B cell (primary cell): ENCODE measurements at regions of chr16 and their contacts with region 1.

Region 1: GRCh38 chr16:71894921-71895678 is at the start of gene IST1:
- DNase-seq: peak; percentile 98
- ATAC-seq: peak; percentile 91
- H3K4me3 ChIP-seq: peak within 1 kb of the TSS; percentile 93 to 100 (median 99)
- H3K4me3 Mint-ChIP-seq: peak within 1 kb of the TSS; percentile 97
- H3K27ac ChIP-seq: peak within 1 kb of the TSS; percentile 83 to 88
- H3K27ac Mint-ChIP-seq: peak within 1 kb of the TSS; percentile 98
- H3K4me1 ChIP-seq: peaks cover 16 to 39% of the 10 kb centered on the region in 2 donors
- H3K4me1 Mint-ChIP-seq: peaks cover 22% of the 10 kb centered on the region
- H3K27me3 ChIP-seq: no peaks in the 10 kb centered on the region
- H3K27me3 Mint-ChIP-seq: no peaks in the 10 kb centered on the region
- CTCF ChIP-seq: no peak
- total RNA-seq, gene IST1: 268 and 302 TPM in 2 replicates

Region 2: DNA sequence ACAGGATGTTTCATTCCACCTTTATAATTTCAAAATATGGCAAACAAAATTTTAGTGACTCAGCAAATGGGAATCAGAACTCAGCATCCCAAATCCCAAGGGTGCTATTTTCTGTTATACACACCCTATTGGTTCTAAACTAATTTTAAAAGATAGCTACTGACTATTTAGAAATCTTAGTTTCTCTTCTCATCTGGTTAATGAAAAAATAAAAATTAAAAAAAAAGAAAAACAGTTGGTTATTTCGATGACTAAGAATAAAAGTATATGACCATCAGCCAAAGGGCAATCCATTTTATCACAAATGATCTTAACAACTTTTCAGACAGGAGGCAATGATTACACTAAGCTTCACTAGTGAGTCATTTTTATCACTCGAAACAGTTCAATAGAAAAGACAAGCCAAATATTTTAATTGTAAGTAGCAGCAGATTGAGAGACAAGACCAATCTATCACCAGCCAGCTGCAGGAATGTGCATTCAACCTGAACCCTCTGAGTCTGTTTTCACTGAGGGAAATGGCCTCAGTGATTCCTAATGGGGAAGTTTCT is 185.8 kb before region 1 on chr16:
- CTCF ChIA-PET with region 1: no interaction called
- POLR2A ChIA-PET with region 1: no interaction called
- intact Hi-C with region 1: no loop called
- DNase-seq: no peak
- ATAC-seq: no peak
- H3K4me3 ChIP-seq: no peak overlapping the region
- H3K4me3 Mint-ChIP-seq: no peak overlapping the region
- H3K27ac ChIP-seq: no peak overlapping the region
- H3K27ac Mint-ChIP-seq: no peak overlapping the region
- H3K4me1 ChIP-seq: peaks cover 0 to 8% of the 10 kb centered on the region in 2 donors
- H3K4me1 Mint-ChIP-seq: peaks cover 3% of the 10 kb centered on the region
- H3K27me3 ChIP-seq: no peaks in the 10 kb centered on the region
- H3K27me3 Mint-ChIP-seq: no peaks in the 10 kb centered on the region
- CTCF ChIP-seq: no peak

Region 3: GRCh38 chr16:71808593-71809459 is 86.3 kb before region 1 on chr16 and contains the start of gene AP1G1:
- CTCF ChIA-PET with region 1: interaction called, 6 read pairs
- POLR2A ChIA-PET with region 1: interaction called, 31 read pairs
- intact Hi-C with region 1: loop called (anchors 1 kb)
- DNase-seq: peak; percentile 99
- ATAC-seq: peak; percentile 89
- H3K4me3 ChIP-seq: peak within 1 kb of the TSS; percentile 87 to 99 (median 96)
- H3K4me3 Mint-ChIP-seq: peak within 1 kb of the TSS; percentile 99
- H3K27ac ChIP-seq: peak within 1 kb of the TSS; percentile 96 to 99
- H3K27ac Mint-ChIP-seq: peak within 1 kb of the TSS; percentile 100
- H3K4me1 ChIP-seq: peaks cover 20 to 27% of the 10 kb centered on the region in 2 donors
- H3K4me1 Mint-ChIP-seq: peaks cover 30% of the 10 kb centered on the region
- H3K27me3 ChIP-seq: no peaks in the 10 kb centered on the region
- H3K27me3 Mint-ChIP-seq: no peaks in the 10 kb centered on the region
- CTCF ChIP-seq: no peak
- total RNA-seq, gene AP1G1: 142 and 159 TPM in 2 replicates

Region 4: GRCh38 chr16:71845639-71846430 is 49.3 kb before region 1 on chr16 and contains the start of gene ATXN1L:
- CTCF ChIA-PET with region 1: interaction called, 4 read pairs
- POLR2A ChIA-PET with region 1: no interaction called
- intact Hi-C with region 1: loop called (anchors 2 kb)
- DNase-seq: peak; percentile 95
- ATAC-seq: peak; percentile 87
- H3K4me3 ChIP-seq: peak within 1 kb of the TSS; percentile 63 to 99 (median 92)
- H3K4me3 Mint-ChIP-seq: peak within 1 kb of the TSS; percentile 92
- H3K27ac ChIP-seq: peak within 1 kb of the TSS; percentile 94 to 95
- H3K27ac Mint-ChIP-seq: peak within 1 kb of the TSS; percentile 98
- H3K4me1 ChIP-seq: peaks cover 29 to 52% of the 10 kb centered on the region in 2 donors
- H3K4me1 Mint-ChIP-seq: peaks cover 50% of the 10 kb centered on the region
- H3K27me3 ChIP-seq: no peaks in the 10 kb centered on the region
- H3K27me3 Mint-ChIP-seq: no peaks in the 10 kb centered on the region
- CTCF ChIP-seq: no peak
- total RNA-seq, gene ATXN1L: 38.4 and 39.5 TPM in 2 replicates

Region 5: GRCh38 chr16:72008424-72009216 is 113.5 kb after region 1 on chr16 and contains the start of gene DHODH:
- CTCF ChIA-PET with region 1: no interaction called
- POLR2A ChIA-PET with region 1: no interaction called
- intact Hi-C with region 1: loop called (anchors 1 kb)
- DNase-seq: peak; percentile 99
- ATAC-seq: peak; percentile 98
- H3K4me3 ChIP-seq: peak within 1 kb of the TSS; percentile 56 to 96 (median 66)
- H3K4me3 Mint-ChIP-seq: peak within 1 kb of the TSS; percentile 95
- H3K27ac ChIP-seq: peak within 1 kb of the TSS; percentile 73 to 85
- H3K27ac Mint-ChIP-seq: peak within 1 kb of the TSS; percentile 94
- H3K4me1 ChIP-seq: peaks cover 0 to 12% of the 10 kb centered on the region in 2 donors
- H3K4me1 Mint-ChIP-seq: peaks cover 16% of the 10 kb centered on the region
- H3K27me3 ChIP-seq: no peaks in the 10 kb centered on the region
- H3K27me3 Mint-ChIP-seq: peaks cover 4% of the 10 kb centered on the region
- CTCF ChIP-seq: no peak
- total RNA-seq, gene DHODH: 11.3 and 14.7 TPM in 2 replicates